ENCODE measurements at regions of chr1 and their contacts with region 1.

Region 1: GRCh38 chr1:40783001-40783905 is at the start of gene KCNQ4:
- DNase-seq: no peak
- H3K4me3 ChIP-seq: peak within 1 kb of the TSS in 2 of 3 experiments; percentile 24 to 33
- H3K27ac ChIP-seq: no peak within 1 kb of the TSS
- H3K4me1 ChIP-seq: peaks cover 5% of the 10 kb centered on the region
- H3K27me3 ChIP-seq: peaks cover 8% of the 10 kb centered on the region
- CTCF ChIP-seq: no peak
- total RNA-seq, gene KCNQ4: not detected

Region 2: DNA sequence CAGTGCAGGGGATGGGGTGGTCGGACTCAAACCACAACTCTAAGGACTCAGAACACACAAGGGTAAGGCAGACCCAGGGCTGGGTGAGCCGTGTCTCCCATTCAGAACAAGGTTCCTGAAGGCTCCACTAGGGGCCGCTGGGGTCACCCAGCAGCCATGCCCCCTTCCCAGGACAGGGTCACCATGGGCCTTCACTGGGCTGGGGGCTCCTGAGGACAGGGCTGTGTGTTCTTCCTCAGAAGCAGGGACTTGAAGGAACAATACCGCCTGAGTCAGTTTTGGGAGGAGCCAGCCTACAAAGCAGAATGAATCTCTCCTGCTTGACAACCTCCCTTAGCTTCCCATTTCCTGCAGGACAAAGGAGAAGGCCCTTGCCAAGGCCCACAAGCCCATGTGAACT is 133.2 kb before region 1 on chr1:
- CTCF ChIA-PET with region 1: no interaction called
- dilution Hi-C with region 1: no loop called
- in situ Hi-C with region 1: no loop called
- intact Hi-C with region 1: no loop called
- DNase-seq: no peak
- H3K4me3 ChIP-seq: no peak overlapping the region
- H3K27ac ChIP-seq: no peak overlapping the region
- H3K4me1 ChIP-seq: peaks cover 16% of the 10 kb centered on the region
- H3K27me3 ChIP-seq: no peaks in the 10 kb centered on the region
- CTCF ChIP-seq: peak in 1 of 2 donors; percentile 29

Region 3: DNA sequence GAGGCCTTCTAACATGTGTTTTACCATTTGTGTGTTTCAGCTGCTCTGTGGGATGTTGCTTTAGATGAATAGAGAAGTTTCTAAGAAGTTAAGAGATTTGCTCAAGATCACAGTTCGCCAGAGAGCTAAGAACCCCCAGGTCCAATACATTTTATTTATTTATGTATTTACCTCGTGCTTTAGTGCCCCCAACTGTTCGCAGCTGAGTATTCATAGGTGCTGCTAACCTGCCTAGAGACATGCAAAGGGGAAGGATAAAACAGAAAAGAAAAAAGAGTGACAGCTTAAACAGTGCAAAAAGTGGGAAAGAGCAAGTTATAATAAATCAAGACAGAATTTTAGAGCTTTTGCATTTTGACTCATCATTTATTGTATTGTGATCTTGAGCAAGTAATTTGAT is 60.6 kb before region 1 on chr1:
- CTCF ChIA-PET with region 1: no interaction called
- dilution Hi-C with region 1: loop called (anchors 5 kb)
- in situ Hi-C with region 1: no loop called
- intact Hi-C with region 1: no loop called
- DNase-seq: no peak
- H3K4me3 ChIP-seq: no peak overlapping the region
- H3K27ac ChIP-seq: no peak overlapping the region
- H3K4me1 ChIP-seq: peaks cover 4% of the 10 kb centered on the region
- H3K27me3 ChIP-seq: no peaks in the 10 kb centered on the region
- CTCF ChIP-seq: peak in 1 of 2 donors; percentile 18

Region 4: GRCh38 chr1:40820251-40820797 is 37.1 kb after region 1 on chr1:
- CTCF ChIA-PET with region 1: no interaction called
- dilution Hi-C with region 1: loop called (anchors 5 kb)
- in situ Hi-C with region 1: no loop called
- intact Hi-C with region 1: no loop called
- DNase-seq: no peak
- H3K4me3 ChIP-seq: no peak overlapping the region
- H3K27ac ChIP-seq: no peak overlapping the region
- H3K4me1 ChIP-seq: peaks cover 4% of the 10 kb centered on the region
- H3K27me3 ChIP-seq: peaks cover 2% of the 10 kb centered on the region
- CTCF ChIP-seq: no peak

Measured in mammary epithelial cell (primary cell).